Aorta (tissue), 5 donors: ENCODE measurements at regions of chr3 and their contacts with region 1.

Region 1: DNA sequence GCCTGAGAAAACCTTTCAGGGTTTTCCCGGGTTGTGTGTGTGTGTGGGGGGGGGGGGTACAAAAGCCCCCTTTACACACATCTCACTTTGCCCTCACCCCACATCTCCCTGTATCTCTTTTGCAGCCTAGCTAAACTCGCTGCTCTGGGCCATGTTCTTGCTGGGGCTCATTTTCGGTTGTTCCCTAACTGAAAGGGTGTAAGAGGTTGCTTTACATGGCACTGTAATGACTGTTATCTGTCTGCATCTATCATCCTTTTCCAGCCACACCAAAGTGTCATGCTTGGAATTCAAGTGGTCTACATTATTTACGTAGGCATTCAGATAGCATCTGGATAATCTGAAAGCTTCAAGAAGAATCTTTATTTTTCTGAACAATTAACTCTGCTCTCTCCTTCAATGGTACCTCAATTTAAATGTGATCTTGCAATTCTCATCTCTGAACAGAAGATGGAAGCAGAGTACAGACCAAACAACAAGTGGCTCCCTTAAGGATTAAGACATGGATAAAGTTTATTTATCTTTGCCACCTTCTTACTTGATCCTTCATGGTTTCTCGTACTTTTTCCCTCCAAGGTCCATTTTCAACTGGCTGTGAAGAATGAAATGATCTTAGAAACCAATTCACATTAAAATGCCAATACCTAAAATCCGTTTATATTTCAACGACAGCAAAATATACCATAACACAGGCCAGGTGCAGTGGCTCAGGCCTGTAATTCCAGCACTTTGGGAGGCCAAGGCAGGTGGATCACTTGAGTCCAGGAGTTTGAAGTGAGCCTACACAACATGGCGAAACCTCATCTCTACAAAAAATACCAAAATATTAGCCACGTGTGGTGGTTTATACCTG is 34.9 kb downstream of the DCLK3 start:
- DNase-seq: no peak
- ATAC-seq: peak; percentile 70
- H3K4me3 ChIP-seq: no peak overlapping the region
- H3K27ac ChIP-seq: no peak overlapping the region
- H3K4me1 ChIP-seq: no peaks in the 10 kb centered on the region
- H3K27me3 ChIP-seq: no peaks in the 10 kb centered on the region

Region 2: DNA sequence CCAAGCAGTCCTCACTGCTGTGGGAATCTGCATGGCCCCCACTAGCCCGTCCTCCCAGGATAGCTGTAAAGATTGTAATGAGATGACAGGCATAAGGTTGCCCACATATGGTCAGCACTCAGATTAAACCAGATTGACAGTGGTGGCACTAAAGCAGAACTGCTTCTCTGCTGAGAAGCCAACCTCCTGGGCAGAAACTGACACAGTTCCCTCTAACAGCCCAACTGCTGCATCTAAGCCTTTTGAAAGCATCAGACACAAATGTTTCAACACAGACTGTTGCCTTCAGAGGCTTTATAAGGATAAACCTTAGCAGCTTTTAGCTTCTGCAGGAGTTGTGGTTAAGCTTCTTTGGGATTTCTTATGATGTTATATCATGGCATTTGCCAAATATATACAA is 21.9 kb after region 1 on chr3:
- intact Hi-C with region 1: no loop called
- DNase-seq: no peak
- ATAC-seq: no peak
- H3K4me3 ChIP-seq: no peak overlapping the region
- H3K27ac ChIP-seq: no peak overlapping the region
- H3K4me1 ChIP-seq: no peaks in the 10 kb centered on the region
- H3K27me3 ChIP-seq: no peaks in the 10 kb centered on the region

Region 3: GRCh38 chr3:36868614-36869436 is 139.4 kb after region 1 on chr3:
- intact Hi-C with region 1: loop called (anchors 2 to 5 kb)
- DNase-seq: no peak
- ATAC-seq: peak; percentile 81
- H3K4me3 ChIP-seq: no peak overlapping the region
- H3K27ac ChIP-seq: no peak overlapping the region
- H3K4me1 ChIP-seq: peaks cover 0 to 2% of the 10 kb centered on the region in 2 donors
- H3K27me3 ChIP-seq: no peaks in the 10 kb centered on the region

Region 4: DNA sequence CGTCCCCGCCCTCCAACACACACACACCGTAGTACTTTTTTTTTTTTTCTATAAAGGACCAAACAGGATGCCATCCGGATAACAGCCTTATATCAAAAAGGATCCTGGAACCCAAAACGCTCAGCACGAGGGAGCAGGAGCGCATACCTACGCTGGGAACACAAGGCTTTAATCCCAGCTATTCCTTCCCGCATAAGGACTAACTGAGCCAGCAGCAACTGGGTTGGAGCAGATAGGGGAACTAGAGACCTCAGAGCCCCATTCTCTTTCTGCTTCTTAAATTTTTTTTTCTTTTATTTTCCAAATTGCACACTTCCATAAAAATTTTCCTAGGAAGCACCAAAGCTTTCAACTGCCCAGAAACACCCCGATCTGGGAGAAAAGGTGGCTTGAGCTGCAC is 214.2 kb after region 1 on chr3:
- intact Hi-C with region 1: no loop called
- DNase-seq: no peak
- ATAC-seq: no peak
- H3K4me3 ChIP-seq: peak overlapping the region; percentile 57 to 61
- H3K27ac ChIP-seq: no peak overlapping the region
- H3K4me1 ChIP-seq: peaks cover 3 to 7% of the 10 kb centered on the region in 2 donors
- H3K27me3 ChIP-seq: no peaks in the 10 kb centered on the region

Region 5: GRCh38 chr3:36964817-36965216 is 235.4 kb after region 1 on chr3:
- intact Hi-C with region 1: no loop called
- DNase-seq: no peak
- ATAC-seq: no peak
- H3K4me3 ChIP-seq: no peak overlapping the region
- H3K27ac ChIP-seq: no peak overlapping the region
- H3K4me1 ChIP-seq: no peaks in the 10 kb centered on the region
- H3K27me3 ChIP-seq: no peaks in the 10 kb centered on the region